Activated CD4-positive, alpha-beta memory T cell treated with anti-CD3 and anti-CD28 coated beads, Interleukin-2, amount 10 ng/mL, durations not matched to agents 7 days and 5 days (primary cell): ENCODE measurements at regions of chr1 and their contacts with region 1.

Region 1: GRCh38 chr1:112955781-112956543 is at the start of gene SLC16A1:
- DNase-seq: peak; percentile 90
- H3K4me3 Mint-ChIP-seq: peak within 1 kb of the TSS; percentile 81
- H3K27ac Mint-ChIP-seq: peak within 1 kb of the TSS; percentile 99
- H3K4me1 Mint-ChIP-seq: peaks cover 56% of the 10 kb centered on the region
- H3K27me3 Mint-ChIP-seq: no peaks in the 10 kb centered on the region
- total RNA-seq, gene SLC16A1: 59.0 to 61.4 TPM

Region 2: DNA sequence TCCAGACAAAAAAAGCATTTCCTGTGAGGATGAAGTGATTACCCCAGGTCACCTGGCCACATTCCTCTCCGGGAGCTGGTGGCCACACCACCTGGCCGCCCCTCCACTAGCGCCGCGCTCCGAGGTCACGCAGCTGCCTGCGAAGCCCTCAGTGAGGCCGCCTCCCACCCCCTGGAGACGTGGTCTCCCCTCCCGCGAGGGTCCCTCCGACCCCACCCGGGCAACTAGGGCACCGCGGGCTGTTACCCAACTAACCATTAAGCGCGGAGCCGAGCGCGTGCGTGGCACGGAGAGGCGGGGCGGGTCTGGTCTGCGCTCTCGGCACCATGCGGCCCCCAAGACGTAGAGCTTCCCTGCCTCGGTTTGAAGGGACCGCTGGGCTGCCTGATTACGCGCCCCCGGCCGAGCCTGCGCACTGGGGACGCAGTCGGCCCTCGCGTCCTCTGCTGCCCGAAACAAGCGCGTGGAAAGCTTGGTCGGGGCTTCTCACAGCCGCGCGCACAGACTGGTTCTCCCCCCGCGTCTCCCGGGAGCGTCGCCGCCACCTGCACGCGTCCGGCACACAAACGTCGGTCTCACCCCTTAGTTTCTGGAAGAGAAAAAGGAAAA is 106.4 kb before region 1 on chr1:
- CTCF ChIA-PET with region 1: no interaction called
- POLR2A ChIA-PET with region 1: no interaction called
- DNase-seq: no peak
- H3K4me3 Mint-ChIP-seq: peak overlapping the region; percentile 13
- H3K27ac Mint-ChIP-seq: no peak overlapping the region
- H3K4me1 Mint-ChIP-seq: peaks cover 4% of the 10 kb centered on the region
- H3K27me3 Mint-ChIP-seq: peaks cover 54% of the 10 kb centered on the region

Region 3: GRCh38 chr1:112904071-112904830 is 51.7 kb before region 1 on chr1:
- CTCF ChIA-PET with region 1: no interaction called
- POLR2A ChIA-PET with region 1: interaction called, 10 read pairs
- DNase-seq: peak; percentile 61
- H3K4me3 Mint-ChIP-seq: peak overlapping the region; percentile 25
- H3K27ac Mint-ChIP-seq: peak overlapping the region; percentile 73
- H3K4me1 Mint-ChIP-seq: peaks cover 35% of the 10 kb centered on the region
- H3K27me3 Mint-ChIP-seq: no peaks in the 10 kb centered on the region

Region 4: DNA sequence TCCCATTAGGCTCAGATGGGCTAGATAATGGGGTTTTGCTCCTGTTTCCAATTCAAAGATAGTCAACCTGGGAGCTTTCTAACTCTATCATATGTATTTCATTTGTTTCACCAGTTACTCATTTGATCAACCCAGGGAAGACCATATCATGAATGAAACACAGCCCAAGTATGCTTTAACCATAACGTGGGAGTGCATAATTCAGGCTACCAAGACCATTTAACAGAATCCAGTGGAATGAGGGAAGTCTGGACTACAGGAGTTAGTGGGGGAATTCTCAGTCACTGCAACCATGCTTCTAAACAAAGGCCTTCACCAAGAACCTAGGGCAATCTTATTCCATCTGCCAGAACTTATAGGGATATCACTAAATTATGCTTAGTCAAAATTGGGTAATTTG is 15.0 kb after region 1 on chr1:
- CTCF ChIA-PET with region 1: interaction called, 5 read pairs
- POLR2A ChIA-PET with region 1: interaction called, 10 read pairs
- DNase-seq: no peak
- H3K4me3 Mint-ChIP-seq: no peak overlapping the region
- H3K27ac Mint-ChIP-seq: no peak overlapping the region
- H3K4me1 Mint-ChIP-seq: peaks cover 4% of the 10 kb centered on the region
- H3K27me3 Mint-ChIP-seq: no peaks in the 10 kb centered on the region